Activated T-helper 2 cell treated with anti-CD3 and anti-CD28 coated beads, Interferon-gamma antibody, Interleukin-2, Interleukin-4, amounts not matched to agents 10 μg/mL and 5 μg/mL and 100 μg/mL, durations not matched to agents 14 hours and 24 hours and 36 hours (primary cell): ENCODE measurements at regions of chr2 and their contacts with region 1.

Region 1: DNA sequence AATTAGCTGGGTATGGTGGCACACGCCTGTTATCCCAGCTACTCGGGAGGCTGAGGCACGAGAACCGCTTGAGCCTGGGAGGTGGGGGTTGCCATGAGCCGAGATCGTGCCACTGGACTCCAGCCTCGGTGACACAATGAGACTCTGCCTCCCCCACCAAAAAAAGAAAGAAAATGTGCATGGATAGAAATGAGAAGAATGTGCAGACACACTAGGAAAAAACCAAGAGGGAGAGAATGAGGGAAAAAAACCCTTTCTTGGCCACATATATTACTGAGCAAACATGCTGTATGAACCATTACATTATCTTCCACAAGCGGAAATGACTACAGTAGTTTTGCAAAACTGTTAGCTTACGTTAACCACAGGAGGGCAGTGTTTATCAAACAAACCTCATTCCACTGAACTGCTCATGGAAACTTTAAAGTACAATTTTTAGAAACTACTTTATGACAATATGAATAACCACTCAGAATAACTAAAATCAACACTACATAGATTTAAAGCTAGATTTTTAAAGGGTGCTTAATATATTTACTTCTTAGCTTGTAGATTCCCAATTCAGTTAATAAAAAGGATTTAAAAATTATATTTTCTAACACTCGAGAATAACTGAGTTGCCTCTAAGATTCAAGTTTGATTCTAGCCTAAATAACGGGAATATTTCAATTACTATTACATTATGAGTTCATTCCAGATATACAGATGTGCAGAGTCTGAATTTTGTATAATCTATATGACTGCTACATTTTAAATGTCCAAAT is 26.4 kb downstream of the ASXL2 start:
- DNase-seq: peak; percentile 25
- H3K4me3 Mint-ChIP-seq: peak overlapping the region; percentile 75
- H3K27ac Mint-ChIP-seq: peak overlapping the region; percentile 85
- H3K4me1 Mint-ChIP-seq: peaks cover 47% of the 10 kb centered on the region
- H3K27me3 Mint-ChIP-seq: no peaks in the 10 kb centered on the region

Region 2: DNA sequence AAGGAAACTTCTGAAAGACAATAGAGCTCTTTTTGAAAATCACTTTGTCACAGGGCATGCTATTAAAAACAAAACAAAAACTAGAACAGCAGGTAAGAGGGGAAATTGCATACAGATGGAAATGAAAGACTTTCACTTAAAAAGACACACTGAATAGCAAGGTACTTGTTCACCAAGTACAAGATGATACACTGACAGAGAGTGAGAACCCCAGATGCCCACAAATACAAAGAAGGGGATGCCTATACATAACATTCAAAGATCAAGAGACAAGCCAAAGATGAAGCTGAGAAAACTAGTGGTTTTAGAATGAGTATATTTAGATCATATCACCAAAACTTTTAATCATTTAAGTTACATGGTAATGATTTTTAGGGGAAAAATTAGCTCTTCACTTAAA is 34.3 kb before region 1 on chr2:
- intact Hi-C with region 1: loop called (anchors 1 kb)
- DNase-seq: no peak
- H3K4me3 Mint-ChIP-seq: no peak overlapping the region
- H3K27ac Mint-ChIP-seq: peak overlapping the region; percentile 82
- H3K4me1 Mint-ChIP-seq: peaks cover 57% of the 10 kb centered on the region
- H3K27me3 Mint-ChIP-seq: no peaks in the 10 kb centered on the region

Region 3: DNA sequence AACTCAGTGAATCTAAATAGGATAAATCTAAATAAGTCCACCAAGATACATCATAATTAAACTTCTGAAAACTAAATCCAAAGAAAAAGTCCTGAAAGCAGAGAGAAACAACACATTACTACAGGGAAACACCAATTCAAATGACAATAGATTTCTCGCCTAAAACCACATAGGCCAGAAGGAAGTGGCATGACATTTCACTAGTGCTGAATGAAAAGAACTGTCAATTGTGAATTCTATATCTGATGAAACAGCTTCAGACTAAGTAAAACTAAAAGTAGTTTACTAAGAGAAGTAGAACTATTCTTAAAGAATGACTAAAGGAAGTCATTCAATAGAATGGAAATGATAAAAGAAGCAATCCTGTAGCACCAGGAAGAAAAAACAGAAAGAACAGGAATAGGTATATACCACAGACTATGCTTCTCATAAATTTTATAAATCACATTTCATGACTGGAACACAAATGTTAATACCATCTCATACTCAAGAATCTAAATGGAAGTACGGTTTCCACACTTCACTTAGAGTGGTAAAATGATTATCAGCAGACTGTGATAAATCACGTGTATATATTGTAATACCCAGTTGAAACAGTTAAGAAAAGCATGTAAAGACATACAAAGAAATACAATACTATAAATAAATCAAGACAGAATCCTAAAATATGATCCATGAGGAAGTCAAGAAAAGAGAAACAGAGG is 20.0 kb before region 1 on chr2:
- intact Hi-C with region 1: loop called (anchors 1 kb)
- DNase-seq: no peak
- H3K4me3 Mint-ChIP-seq: peak overlapping the region; percentile 39
- H3K27ac Mint-ChIP-seq: peak overlapping the region; percentile 77
- H3K4me1 Mint-ChIP-seq: peaks cover 53% of the 10 kb centered on the region
- H3K27me3 Mint-ChIP-seq: no peaks in the 10 kb centered on the region

Region 4: GRCh38 chr2:25878361-25879132 is 26.6 kb after region 1 on chr2 and contains the start of gene ASXL2:
- intact Hi-C with region 1: loop called (anchors 1 kb)
- DNase-seq: peak; percentile 98
- H3K4me3 Mint-ChIP-seq: peak within 1 kb of the TSS; percentile 95
- H3K27ac Mint-ChIP-seq: peak within 1 kb of the TSS; percentile 95
- H3K4me1 Mint-ChIP-seq: peaks cover 43% of the 10 kb centered on the region
- H3K27me3 Mint-ChIP-seq: no peaks in the 10 kb centered on the region
- total RNA-seq, gene ASXL2: 76.7 and 80.7 TPM in 2 replicates